ENCODE measurements at regions of chr7 and their contacts with region 1.

Region 1: GRCh38 chr7:142632291-142633134 is 116.8 kb upstream of the PRSS1 start:
- DNase-seq: peak; percentile 87
- ATAC-seq: peak; percentile 96
- H3K4me3 ChIP-seq: no peak overlapping the region
- H3K27ac ChIP-seq: no peak overlapping the region
- H3K4me1 ChIP-seq: no peaks in the 10 kb centered on the region; the same call in 1 of the 2 replicates
- H3K27me3 ChIP-seq: peaks cover 7% of the 10 kb centered on the region; the same call in 1 of the 2 replicates
- CTCF ChIP-seq: peak; percentile 83

Region 2: DNA sequence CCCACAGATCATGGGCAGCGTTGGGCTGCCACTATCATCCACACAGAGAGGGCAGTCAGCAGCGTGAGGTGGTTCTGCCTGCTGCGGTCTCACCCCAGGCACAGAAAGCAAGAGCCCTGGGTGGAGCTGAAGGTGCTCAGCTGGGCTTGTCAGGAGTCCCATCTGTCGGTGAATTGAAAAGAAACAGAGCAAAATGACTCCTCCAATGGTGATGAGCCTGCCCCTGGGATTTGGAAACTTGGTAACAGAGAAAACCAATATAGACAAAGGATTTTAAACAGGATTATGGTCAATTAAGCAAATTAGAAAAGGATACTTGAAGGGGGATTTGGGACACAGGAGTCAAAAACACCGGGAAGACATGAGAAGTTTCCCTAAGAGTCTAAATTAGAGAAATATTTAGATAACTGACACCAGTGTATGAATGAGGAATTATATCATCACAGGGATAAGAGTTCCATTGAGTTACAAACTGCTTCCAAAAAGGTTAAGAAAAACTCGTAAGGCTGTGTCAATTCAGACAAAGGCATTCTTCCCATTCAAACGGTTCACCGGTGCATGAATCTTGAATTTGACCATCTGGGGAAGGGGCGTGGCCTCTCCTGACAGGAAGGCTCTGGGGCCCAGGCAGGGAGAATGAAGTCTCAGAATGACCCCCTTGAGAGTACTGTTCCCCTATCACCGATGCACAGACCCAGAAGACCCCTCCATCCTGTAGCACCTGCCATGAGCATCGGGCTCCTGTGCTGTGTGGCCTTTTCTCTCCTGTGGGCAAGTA is 304.7 kb before region 1 on chr7:
- CTCF ChIA-PET with region 1: no interaction called
- POLR2A ChIA-PET with region 1: no interaction called
- intact Hi-C with region 1: no loop called
- DNase-seq: no peak
- ATAC-seq: no peak
- H3K4me3 ChIP-seq: no peak overlapping the region
- H3K27ac ChIP-seq: no peak overlapping the region
- H3K4me1 ChIP-seq: no peaks in the 10 kb centered on the region
- H3K27me3 ChIP-seq: peaks cover 39% of the 10 kb centered on the region
- CTCF ChIP-seq: no peak

Region 3: DNA sequence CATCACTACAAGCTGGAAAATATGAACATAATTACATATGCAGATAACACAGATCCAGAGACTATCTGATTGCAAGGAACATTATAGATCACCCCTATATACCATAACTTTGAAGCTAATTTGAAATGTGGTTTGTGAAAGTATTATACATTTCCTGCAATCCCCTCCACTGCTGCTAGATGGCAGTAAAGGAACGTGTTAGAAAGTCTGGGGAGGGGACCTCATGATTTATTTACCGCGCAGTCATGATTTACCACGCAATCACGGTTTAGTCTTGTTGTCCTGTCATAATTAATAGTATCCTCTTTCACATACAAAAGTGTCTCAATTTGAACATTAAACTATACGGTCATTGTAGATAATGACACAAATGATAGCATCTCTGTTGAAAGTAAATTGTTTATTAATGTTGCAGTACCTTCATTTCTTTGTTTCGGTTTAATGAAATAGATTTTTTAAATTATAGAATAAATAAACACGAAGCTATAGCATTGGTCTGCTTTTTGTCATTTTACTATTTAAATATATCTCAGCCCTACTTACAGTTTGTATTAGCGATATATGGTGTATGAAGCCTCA is 28.6 kb before region 1 on chr7:
- CTCF ChIA-PET with region 1: interaction called, 7 read pairs
- POLR2A ChIA-PET with region 1: no interaction called
- intact Hi-C with region 1: loop called (anchors 2 kb)
- DNase-seq: peak; percentile 84
- ATAC-seq: peak; percentile 75
- H3K4me3 ChIP-seq: peak overlapping the region; percentile 74
- H3K27ac ChIP-seq: no peak overlapping the region
- H3K4me1 ChIP-seq: peaks cover 8% of the 10 kb centered on the region
- H3K27me3 ChIP-seq: no peaks in the 10 kb centered on the region
- CTCF ChIP-seq: peak; percentile 93

Region 4: GRCh38 chr7:142615508-142615907 is 17.0 kb before region 1 on chr7:
- CTCF ChIA-PET with region 1: no interaction called
- POLR2A ChIA-PET with region 1: no interaction called
- intact Hi-C with region 1: no loop called
- DNase-seq: no peak
- ATAC-seq: no peak
- H3K4me3 ChIP-seq: no peak overlapping the region
- H3K27ac ChIP-seq: no peak overlapping the region
- H3K4me1 ChIP-seq: peaks cover 23% of the 10 kb centered on the region
- H3K27me3 ChIP-seq: no peaks in the 10 kb centered on the region
- CTCF ChIP-seq: no peak

Region 5: DNA sequence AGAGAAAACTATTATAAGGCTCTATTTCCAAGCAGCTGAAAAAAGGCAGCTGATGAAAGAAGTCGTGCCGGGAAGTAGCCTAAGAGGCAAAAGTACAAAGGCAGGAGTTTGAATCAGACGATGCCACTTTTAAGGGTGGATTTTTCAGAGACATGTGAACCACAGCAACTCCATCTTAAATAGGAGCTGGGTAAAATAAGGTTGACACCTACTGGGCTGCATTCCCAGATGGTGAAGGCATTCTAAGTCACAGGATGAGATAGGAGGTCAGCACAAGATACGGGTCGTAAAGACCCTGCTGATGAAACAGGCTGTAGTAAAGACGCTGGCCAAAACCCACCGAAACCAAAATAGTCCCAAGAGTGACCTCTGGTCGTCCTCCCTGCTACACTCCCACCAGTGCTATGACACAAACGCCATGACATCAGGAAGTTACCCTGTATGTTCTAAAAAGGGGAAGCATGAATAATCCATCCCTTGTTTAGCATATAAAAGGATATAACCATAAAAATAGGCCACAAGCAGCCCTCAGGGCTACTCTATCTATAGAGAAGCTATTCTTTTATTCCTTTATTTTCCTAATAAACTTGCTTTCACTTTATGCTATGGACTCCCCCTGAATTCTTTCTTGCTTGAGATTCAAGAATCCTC is 71.3 kb after region 1 on chr7:
- CTCF ChIA-PET with region 1: no interaction called
- POLR2A ChIA-PET with region 1: no interaction called
- intact Hi-C with region 1: no loop called
- DNase-seq: no peak
- ATAC-seq: no peak
- H3K4me3 ChIP-seq: no peak overlapping the region
- H3K27ac ChIP-seq: no peak overlapping the region
- H3K4me1 ChIP-seq: no peaks in the 10 kb centered on the region
- H3K27me3 ChIP-seq: no peaks in the 10 kb centered on the region
- CTCF ChIP-seq: no peak

Region 6: DNA sequence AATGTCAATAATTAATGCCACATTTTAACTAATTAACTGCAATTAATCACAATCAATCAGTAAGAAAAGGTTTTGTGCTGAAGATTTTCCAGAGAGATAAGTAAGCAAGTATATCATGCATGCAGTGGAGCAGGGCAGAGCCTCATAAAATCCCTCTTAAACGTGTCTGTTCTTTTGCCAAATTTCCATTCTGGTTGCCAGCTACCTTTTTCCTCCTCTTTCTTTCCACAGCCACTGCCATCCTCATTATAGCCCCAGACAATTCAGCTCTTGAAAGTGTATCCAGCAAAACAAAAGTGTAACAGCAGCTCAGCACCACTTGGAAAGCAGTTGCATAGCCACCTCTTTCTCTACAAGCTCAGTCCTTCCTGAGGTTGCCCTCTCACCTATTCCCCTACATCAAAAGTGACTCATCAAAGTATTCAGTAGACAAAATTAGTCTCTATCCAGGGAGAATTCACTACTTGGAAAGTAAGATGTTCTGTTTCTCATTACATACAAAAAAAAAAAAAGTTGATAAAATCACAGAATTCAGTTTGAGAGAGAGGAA is 195.5 kb after region 1 on chr7:
- CTCF ChIA-PET with region 1: interaction called, 10 read pairs
- POLR2A ChIA-PET with region 1: no interaction called
- intact Hi-C with region 1: no loop called
- DNase-seq: peak; percentile 65
- ATAC-seq: peak; percentile 90
- H3K4me3 ChIP-seq: peak overlapping the region; percentile 45
- H3K27ac ChIP-seq: peak overlapping the region; percentile 81
- H3K4me1 ChIP-seq: peaks cover 27% of the 10 kb centered on the region
- H3K27me3 ChIP-seq: no peaks in the 10 kb centered on the region
- CTCF ChIP-seq: no peak

Region 7: GRCh38 chr7:143008007-143008901 is 375.7 kb after region 1 on chr7:
- CTCF ChIA-PET with region 1: interaction called, 4 read pairs
- POLR2A ChIA-PET with region 1: no interaction called
- intact Hi-C with region 1: loop called (anchors 10 kb)
- DNase-seq: peak; percentile 81
- ATAC-seq: peak; percentile 84
- H3K4me3 ChIP-seq: no peak overlapping the region
- H3K27ac ChIP-seq: no peak overlapping the region
- H3K4me1 ChIP-seq: peaks cover under 1% of the 10 kb centered on the region
- H3K27me3 ChIP-seq: peaks cover 31% of the 10 kb centered on the region
- CTCF ChIP-seq: peak; percentile 87

Region 8: GRCh38 chr7:143269251-143269650 is 636.7 kb after region 1 on chr7:
- CTCF ChIA-PET with region 1: no interaction called
- POLR2A ChIA-PET with region 1: no interaction called
- intact Hi-C with region 1: no loop called
- DNase-seq: no peak
- ATAC-seq: no peak
- H3K4me3 ChIP-seq: no peak overlapping the region
- H3K27ac ChIP-seq: no peak overlapping the region
- H3K4me1 ChIP-seq: peaks cover 7% of the 10 kb centered on the region
- H3K27me3 ChIP-seq: no peaks in the 10 kb centered on the region
- CTCF ChIP-seq: no peak